CD4-positive, alpha-beta memory T cell (primary cell): ENCODE measurements at regions of chr10 and their contacts with region 1.

Region 1: DNA sequence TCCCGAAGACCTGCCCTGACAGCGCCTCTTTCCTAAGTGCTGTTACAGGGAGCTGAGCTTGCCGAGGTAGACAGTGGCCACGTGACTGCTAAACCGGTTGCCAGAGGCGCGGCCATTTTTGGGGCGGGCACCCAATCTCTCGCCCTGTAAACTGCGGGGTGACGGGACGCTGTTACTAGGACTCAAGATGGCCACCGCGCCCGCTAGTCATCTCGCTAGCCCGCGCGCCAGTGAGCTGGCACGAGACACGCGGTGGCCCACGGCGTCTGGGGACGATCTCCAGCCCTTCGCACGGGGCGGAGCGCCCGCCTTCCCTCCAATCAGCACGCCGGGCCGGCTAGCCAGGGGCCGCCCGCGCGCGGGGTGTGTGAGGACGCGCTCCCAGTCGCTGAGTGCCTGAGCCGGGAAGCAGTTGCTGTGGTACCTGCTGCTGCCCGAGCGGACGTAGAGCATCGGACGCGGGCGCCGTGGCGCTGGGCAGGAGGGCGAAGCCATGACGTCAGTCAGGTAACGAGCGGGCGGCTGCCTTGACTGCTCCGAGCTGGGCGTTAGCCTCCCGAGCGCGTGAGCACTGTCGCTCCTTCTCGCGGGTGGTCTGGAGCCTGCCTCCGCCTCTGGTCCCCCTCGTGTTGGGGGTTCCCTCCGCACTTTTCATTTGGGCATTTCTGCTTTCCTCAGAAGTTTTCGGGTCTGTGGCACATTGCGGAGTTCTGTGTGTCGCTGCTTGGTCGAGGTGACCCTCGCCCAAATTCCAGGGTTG is 25.5 kb downstream of the ADK start:
- DNase-seq: peak; percentile 95 to 98 (median 97)
- H3K4me3 ChIP-seq: peak overlapping the region; percentile 82 to 92
- H3K4me3 Mint-ChIP-seq: peak overlapping the region; percentile 90 to 94 (median 93)
- H3K27ac ChIP-seq: peak overlapping the region; percentile 76
- H3K27ac Mint-ChIP-seq: peak overlapping the region; percentile 96 to 98 (median 97)
- H3K4me1 ChIP-seq: peaks cover 42% of the 10 kb centered on the region
- H3K4me1 Mint-ChIP-seq: peaks cover 24 to 49% (median 39%) of the 10 kb centered on the region in 4 donors
- H3K27me3 ChIP-seq: no peaks in the 10 kb centered on the region
- H3K27me3 Mint-ChIP-seq: no peaks in the 10 kb centered on the region

Region 2: DNA sequence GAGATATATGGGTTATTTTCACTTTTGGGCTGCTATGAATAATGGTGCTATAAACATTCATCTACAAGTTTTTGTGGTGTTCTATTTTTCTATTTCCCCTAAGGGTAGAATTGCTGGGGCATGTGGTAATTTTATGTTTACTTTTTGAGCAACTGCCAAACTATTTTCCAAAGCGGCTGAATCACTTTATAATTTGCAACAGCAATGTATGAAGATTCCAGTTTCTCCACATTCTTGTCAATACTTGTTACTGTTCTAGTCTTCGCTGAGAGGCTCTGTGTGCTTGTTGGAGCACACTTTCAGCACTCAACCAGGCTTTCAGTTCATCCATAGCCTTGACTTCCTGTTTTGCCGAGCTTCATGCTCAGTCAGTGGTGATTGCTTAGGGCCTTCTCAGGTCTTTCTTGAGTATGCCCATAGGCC is 13.4 kb after region 1 on chr10:
- CTCF ChIA-PET with region 1: interaction called, 5 read pairs
- POLR2A ChIA-PET with region 1: interaction called, 24 read pairs
- intact Hi-C with region 1: loop called (anchors 2 kb)
- DNase-seq: peak in 4 of 5 donors; percentile 28 to 40 (median 34)
- H3K4me3 ChIP-seq: peak overlapping the region; percentile 7 to 11
- H3K4me3 Mint-ChIP-seq: peak overlapping the region in 7 of 8 donors; percentile 42 to 91 (median 77)
- H3K27ac ChIP-seq: peak overlapping the region; percentile 28
- H3K27ac Mint-ChIP-seq: peak overlapping the region; percentile 73 to 98 (median 95)
- H3K4me1 ChIP-seq: peaks cover 41% of the 10 kb centered on the region
- H3K4me1 Mint-ChIP-seq: peaks cover 38 to 74% (median 57%) of the 10 kb centered on the region in 4 donors
- H3K27me3 ChIP-seq: no peaks in the 10 kb centered on the region
- H3K27me3 Mint-ChIP-seq: no peaks in the 10 kb centered on the region

Region 3: GRCh38 chr10:74227697-74228424 is 51.3 kb after region 1 on chr10:
- CTCF ChIA-PET with region 1: no interaction called
- POLR2A ChIA-PET with region 1: interaction called, 21 read pairs
- intact Hi-C with region 1: loop called (anchors 5 kb)
- DNase-seq: peak in 3 of 5 donors; percentile 24 to 28 (median 26)
- H3K4me3 ChIP-seq: no peak overlapping the region
- H3K4me3 Mint-ChIP-seq: peak overlapping the region; percentile 57 to 85 (median 76)
- H3K27ac ChIP-seq: peak overlapping the region; percentile 31
- H3K27ac Mint-ChIP-seq: peak overlapping the region; percentile 89 to 98 (median 94)
- H3K4me1 ChIP-seq: peaks cover 39% of the 10 kb centered on the region
- H3K4me1 Mint-ChIP-seq: peaks cover 16 to 40% (median 27%) of the 10 kb centered on the region in 4 donors
- H3K27me3 ChIP-seq: no peaks in the 10 kb centered on the region
- H3K27me3 Mint-ChIP-seq: no peaks in the 10 kb centered on the region